KBM-7 (cell line): ENCODE measurements at regions of chr17 and their contacts with region 1.

Region 1: DNA sequence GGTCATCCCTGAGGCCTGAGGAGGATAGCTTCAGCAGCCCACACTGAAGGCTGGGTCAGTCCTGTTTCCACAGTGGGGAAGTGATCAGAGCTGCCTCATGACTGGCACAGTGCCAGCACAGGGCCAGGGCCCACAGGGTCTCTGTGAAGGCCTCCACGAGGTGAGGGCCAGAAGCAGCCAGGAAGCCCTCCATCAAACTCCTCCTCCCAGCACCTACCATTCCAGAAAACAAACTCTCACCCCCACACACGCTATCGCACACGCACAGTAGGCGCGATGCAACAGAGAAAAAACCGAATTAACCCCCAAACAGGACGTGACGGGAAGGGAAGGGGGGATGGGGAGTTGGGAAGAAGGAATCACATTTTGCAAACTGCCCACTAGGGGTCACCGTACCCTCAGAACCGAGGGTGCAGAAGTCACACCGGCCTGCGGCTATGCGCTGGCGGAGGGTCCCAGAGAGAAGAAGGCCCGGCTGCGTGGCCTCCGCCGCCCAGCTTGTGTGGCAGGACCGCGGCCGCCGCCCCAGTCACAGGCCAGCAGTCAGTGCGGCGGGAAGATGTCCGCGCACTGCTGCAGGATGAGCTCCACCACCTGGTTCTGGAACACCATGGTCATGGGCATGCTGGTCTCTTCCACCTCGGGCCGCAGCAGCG is 37.6 kb downstream of the ARHGAP27 start:
- DNase-seq: peak; percentile 82

Region 2: DNA sequence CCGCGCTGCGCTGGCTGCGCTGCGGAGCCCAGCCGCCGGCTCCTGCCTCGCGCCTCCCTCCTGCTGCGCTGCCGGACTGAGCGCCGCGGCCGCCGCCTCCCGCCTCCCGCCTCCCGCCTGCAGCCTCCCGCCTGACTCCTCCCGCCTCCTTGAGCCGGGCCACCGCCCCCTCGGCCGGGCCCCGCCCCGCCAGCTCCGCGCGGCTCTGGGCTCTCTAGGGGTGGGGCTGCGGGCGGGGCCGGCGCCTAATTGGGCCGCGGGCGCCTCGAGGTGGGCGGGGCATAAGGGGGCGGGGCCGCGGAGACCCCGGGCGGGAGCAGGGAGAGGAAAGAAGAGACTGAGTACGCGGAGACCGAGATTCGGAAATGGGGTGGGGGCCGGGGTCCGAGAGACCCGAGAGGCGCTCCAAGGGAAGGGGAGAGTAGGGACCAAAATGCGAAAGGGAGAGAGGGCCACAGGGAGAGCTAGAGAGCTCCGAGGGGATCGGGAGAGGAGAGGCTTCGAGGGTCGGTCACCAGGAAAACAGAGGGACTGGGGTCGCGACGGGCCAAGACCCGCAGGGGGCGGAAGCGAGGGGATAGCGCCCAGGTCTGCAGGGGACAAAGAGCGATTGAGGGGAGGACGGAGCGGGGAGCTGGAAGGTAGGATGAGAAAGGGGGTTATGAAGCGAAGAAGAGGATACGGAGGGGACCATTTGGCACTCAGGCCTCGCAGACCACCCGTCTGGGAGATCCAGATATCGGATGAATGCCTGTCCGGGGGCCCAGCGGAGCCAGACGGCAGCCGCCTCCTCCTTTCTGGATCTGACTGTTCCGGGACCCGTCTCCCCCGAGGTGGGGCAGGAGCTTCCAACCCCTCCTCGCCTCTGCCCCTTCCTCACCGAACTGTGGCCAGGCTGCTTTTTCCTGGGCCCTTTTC is 426.6 kb before region 1 on chr17 and contains the start of gene C1QL1:
- in situ Hi-C with region 1: no loop called
- DNase-seq: peak; percentile 85

Region 3: DNA sequence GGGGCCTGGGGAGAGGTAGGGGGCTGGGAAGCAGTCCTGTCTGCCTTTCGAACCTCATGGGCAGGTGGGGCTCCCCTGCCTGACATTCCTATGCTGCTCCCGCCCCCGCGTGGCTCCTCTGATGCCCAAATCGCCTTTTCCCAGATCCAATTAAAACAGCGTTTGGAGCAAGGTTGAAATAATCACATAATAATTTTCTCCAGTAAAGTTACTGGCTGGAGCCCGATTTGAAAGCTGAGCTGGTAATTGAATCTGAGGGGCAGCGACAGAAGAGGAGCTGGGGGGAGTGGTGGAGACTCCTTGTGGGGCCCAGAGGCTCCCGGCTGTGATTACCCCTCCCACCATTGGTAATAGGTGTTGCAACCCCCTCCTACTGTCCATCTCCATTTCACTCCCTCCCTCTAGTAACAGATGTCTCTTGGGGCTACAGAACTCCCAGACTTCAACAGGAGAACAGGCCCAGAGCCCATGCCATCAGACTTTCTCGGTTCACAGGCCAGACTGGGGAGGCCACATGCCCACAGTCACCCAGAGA is 388.0 kb before region 1 on chr17:
- in situ Hi-C with region 1: no loop called
- DNase-seq: no peak

Region 4: DNA sequence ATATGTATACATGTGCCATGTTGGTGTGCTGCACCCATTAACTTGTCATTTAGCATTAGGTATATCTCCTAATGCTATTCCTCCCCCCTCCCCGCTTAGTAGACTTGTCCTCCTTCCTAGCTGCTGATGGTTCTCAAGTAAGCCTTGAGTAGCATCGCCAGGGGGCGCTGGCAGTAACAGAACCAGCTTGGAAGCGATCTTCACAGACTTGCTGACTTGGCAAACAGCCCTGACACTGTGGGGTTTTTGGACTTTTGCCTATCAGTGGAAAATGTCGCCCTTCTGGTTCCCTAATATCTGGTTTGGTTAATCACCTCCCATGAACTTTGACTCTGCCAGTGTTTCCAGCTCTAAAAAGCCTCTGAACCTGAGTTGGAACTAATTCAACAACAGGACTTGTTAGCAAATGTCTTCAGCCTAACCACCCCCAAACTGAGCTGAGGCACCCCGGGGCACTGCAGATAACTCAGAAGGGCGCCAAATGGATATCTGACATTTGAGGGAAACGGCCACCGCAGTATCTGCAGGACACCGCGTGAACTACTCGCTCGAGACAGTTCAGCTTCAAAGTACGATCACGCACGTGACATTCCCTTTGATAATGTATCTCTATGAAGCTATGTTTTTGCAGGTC is 117.7 kb before region 1 on chr17:
- in situ Hi-C with region 1: loop called (anchors 10 kb)
- DNase-seq: peak; percentile 91